ENCODE measurements at regions of chr2 and their contacts with region 1.

Region 1: GRCh38 chr2:101883863-101884262 is 107.9 kb upstream of the IL1R2 start:
- DNase-seq: no peak
- ATAC-seq: peak; percentile 67
- H3K4me3 Mint-ChIP-seq: no peak overlapping the region
- H3K27ac Mint-ChIP-seq: no peak overlapping the region
- H3K4me1 Mint-ChIP-seq: peaks cover 2% of the 10 kb centered on the region
- H3K27me3 Mint-ChIP-seq: no peaks in the 10 kb centered on the region
- CTCF ChIP-seq: no peak

Region 2: DNA sequence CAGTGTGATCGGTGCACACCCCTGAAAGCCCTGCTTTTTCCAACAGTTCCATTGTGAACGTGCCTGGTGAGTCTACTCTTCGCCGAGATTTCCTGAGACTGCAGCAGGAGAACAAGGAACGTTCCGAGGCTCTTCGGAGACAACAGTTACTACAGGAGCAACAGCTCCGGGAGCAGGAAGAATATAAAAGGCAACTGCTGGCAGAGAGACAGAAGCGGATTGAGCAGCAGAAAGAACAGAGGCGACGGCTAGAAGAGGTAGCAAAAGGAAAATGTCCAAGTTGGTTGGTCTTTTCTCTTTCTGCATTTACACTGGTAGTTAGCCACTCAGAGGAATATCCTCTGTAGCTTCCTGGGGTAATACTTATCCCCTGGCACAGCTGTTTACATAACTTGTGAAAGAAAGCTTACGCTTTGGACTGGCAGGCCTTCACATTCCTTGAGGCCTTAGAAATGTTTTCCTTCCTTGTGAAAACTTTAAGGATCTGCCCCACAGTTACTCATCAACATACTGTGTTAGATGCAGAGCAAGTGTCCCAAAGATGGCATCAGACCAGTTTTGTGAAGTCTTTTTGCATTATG is 39.7 kb before region 1 on chr2:
- CTCF ChIA-PET with region 1: no interaction called
- POLR2A ChIA-PET with region 1: no interaction called
- intact Hi-C with region 1: loop called (anchors 5 kb)
- DNase-seq: no peak
- ATAC-seq: no peak
- H3K4me3 Mint-ChIP-seq: no peak overlapping the region
- H3K27ac Mint-ChIP-seq: no peak overlapping the region
- H3K4me1 Mint-ChIP-seq: peaks cover 8% of the 10 kb centered on the region
- H3K27me3 Mint-ChIP-seq: no peaks in the 10 kb centered on the region
- CTCF ChIP-seq: no peak

Region 3: GRCh38 chr2:101864426-101864825 is 19.4 kb before region 1 on chr2:
- CTCF ChIA-PET with region 1: interaction called, 16 read pairs
- POLR2A ChIA-PET with region 1: no interaction called
- intact Hi-C with region 1: no loop called
- DNase-seq: no peak
- ATAC-seq: no peak
- H3K4me3 Mint-ChIP-seq: no peak overlapping the region
- H3K27ac Mint-ChIP-seq: no peak overlapping the region
- H3K4me1 Mint-ChIP-seq: no peaks in the 10 kb centered on the region
- H3K27me3 Mint-ChIP-seq: no peaks in the 10 kb centered on the region
- CTCF ChIP-seq: no peak

Region 4: GRCh38 chr2:101998896-101999789 is 115.3 kb after region 1 on chr2:
- CTCF ChIA-PET with region 1: interaction called, 7 read pairs
- POLR2A ChIA-PET with region 1: no interaction called
- intact Hi-C with region 1: loop called (anchors 10 kb)
- DNase-seq: no peak
- ATAC-seq: no peak
- H3K4me3 Mint-ChIP-seq: no peak overlapping the region
- H3K27ac Mint-ChIP-seq: no peak overlapping the region
- H3K4me1 Mint-ChIP-seq: no peaks in the 10 kb centered on the region
- H3K27me3 Mint-ChIP-seq: no peaks in the 10 kb centered on the region
- CTCF ChIP-seq: no peak

Region 5: GRCh38 chr2:102355526-102356380 is 471.9 kb after region 1 on chr2 and contains the start of gene IL18R1:
- CTCF ChIA-PET with region 1: no interaction called
- POLR2A ChIA-PET with region 1: no interaction called
- intact Hi-C with region 1: loop called (anchors 10 kb)
- DNase-seq: peak; percentile 67
- ATAC-seq: peak; percentile 91
- H3K4me3 Mint-ChIP-seq: peak within 1 kb of the TSS; percentile 90
- H3K27ac Mint-ChIP-seq: peak within 1 kb of the TSS; percentile 86
- H3K4me1 Mint-ChIP-seq: peaks cover 25% of the 10 kb centered on the region
- H3K27me3 Mint-ChIP-seq: no peaks in the 10 kb centered on the region
- CTCF ChIP-seq: no peak
- total RNA-seq, gene IL18R1: 1.7 and 2.2 TPM in 2 replicates

Region 6: GRCh38 chr2:102442967-102443828 is 559.3 kb after region 1 on chr2:
- CTCF ChIA-PET with region 1: interaction called, 6 read pairs
- POLR2A ChIA-PET with region 1: no interaction called
- intact Hi-C with region 1: loop called (anchors 2 kb)
- DNase-seq: no peak
- ATAC-seq: peak; percentile 49
- H3K4me3 Mint-ChIP-seq: no peak overlapping the region
- H3K27ac Mint-ChIP-seq: no peak overlapping the region
- H3K4me1 Mint-ChIP-seq: peaks cover 2% of the 10 kb centered on the region
- H3K27me3 Mint-ChIP-seq: no peaks in the 10 kb centered on the region
- CTCF ChIP-seq: no peak

Measured in activated B cell treated with CpG ODN at 0.5 μM for 24 hours (primary cell).